A673 (cell line): ENCODE measurements at regions of chr1 and their contacts with region 1.

Region 1: GRCh38 chr1:232950197-232951176 is at the start of gene NTPCR:
- DNase-seq: peak; percentile 95
- H3K4me3 ChIP-seq: peak within 1 kb of the TSS; percentile 73
- H3K27ac ChIP-seq: peak within 1 kb of the TSS; percentile 74
- H3K4me1 ChIP-seq: peaks cover 20% of the 10 kb centered on the region
- H3K27me3 ChIP-seq: no peaks in the 10 kb centered on the region
- CTCF ChIP-seq: no peak
- total RNA-seq, gene NTPCR: 50.0 and 61.6 TPM in 2 replicates

Region 2: DNA sequence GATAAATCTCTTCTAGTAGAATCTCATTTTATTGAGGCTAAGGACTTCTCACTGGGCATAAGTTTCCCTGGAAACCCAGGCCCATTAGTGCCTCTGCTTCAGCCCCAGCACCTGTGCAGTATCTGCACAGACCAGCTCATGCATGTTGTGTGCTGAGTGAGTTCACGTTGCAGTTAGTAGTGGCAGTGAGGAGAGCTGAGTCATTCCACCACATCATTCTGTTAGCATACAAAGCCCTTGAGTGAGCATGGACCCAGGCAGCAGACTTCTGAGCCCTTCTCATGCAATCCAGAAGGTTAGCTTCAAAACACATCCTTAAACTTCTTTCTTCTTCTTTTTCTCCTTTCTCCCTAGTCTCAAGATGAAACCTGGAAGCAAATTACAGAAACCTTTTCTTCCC is 45.9 kb before region 1 on chr1:
- CTCF ChIA-PET with region 1: interaction called, 10 read pairs
- POLR2A ChIA-PET with region 1: no interaction called
- intact Hi-C with region 1: no loop called
- DNase-seq: no peak
- H3K4me3 ChIP-seq: no peak overlapping the region
- H3K27ac ChIP-seq: no peak overlapping the region
- H3K4me1 ChIP-seq: no peaks in the 10 kb centered on the region
- H3K27me3 ChIP-seq: no peaks in the 10 kb centered on the region
- CTCF ChIP-seq: no peak

Region 3: GRCh38 chr1:232923739-232924386 is 26.6 kb before region 1 on chr1:
- CTCF ChIA-PET with region 1: no interaction called
- POLR2A ChIA-PET with region 1: no interaction called
- intact Hi-C with region 1: no loop called
- DNase-seq: no peak
- H3K4me3 ChIP-seq: no peak overlapping the region
- H3K27ac ChIP-seq: no peak overlapping the region
- H3K4me1 ChIP-seq: peaks cover 12% of the 10 kb centered on the region
- H3K27me3 ChIP-seq: no peaks in the 10 kb centered on the region
- CTCF ChIP-seq: no peak